Activated B cell treated with CpG ODN at 0.5 μM for 24 hours (primary cell): ENCODE measurements at regions of chr3 and their contacts with region 1.

Region 1: GRCh38 chr3:186783073-186783730 is at the start of gene EIF4A2:
- DNase-seq: peak; percentile 88
- ATAC-seq: peak; percentile 77
- H3K4me3 Mint-ChIP-seq: peak within 1 kb of the TSS; percentile 98
- H3K27ac Mint-ChIP-seq: peak within 1 kb of the TSS; percentile 99
- H3K4me1 Mint-ChIP-seq: peaks cover 48% of the 10 kb centered on the region
- H3K27me3 Mint-ChIP-seq: no peaks in the 10 kb centered on the region
- CTCF ChIP-seq: no peak
- total RNA-seq, gene EIF4A2: 533 and 574 TPM in 2 replicates

Region 2: DNA sequence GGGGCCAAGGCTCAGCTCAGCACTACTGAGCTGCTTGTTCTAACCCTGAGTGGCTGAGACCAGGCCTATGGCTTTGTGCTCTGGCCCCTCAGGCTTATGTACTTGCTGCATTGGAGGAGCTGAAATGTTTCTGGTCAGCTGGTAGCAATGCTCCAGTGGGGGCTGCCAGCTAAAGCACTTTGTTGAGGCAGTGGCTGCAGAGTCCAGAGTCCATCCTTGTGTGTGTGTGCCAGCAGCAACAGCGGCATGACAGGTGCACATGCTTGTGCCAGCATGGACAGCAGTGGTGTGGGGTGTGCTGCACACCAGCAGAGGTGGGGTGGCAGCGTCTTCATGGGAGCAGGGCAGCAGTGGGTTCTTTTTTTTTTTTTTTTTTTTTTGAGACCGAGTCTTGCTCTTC is 1802.1 kb before region 1 on chr3:
- CTCF ChIA-PET with region 1: no interaction called
- POLR2A ChIA-PET with region 1: no interaction called
- intact Hi-C with region 1: no loop called
- DNase-seq: no peak
- ATAC-seq: no peak
- H3K4me3 Mint-ChIP-seq: no peak overlapping the region
- H3K27ac Mint-ChIP-seq: no peak overlapping the region
- H3K4me1 Mint-ChIP-seq: peaks cover 4% of the 10 kb centered on the region
- H3K27me3 Mint-ChIP-seq: no peaks in the 10 kb centered on the region
- CTCF ChIP-seq: no peak

Region 3: DNA sequence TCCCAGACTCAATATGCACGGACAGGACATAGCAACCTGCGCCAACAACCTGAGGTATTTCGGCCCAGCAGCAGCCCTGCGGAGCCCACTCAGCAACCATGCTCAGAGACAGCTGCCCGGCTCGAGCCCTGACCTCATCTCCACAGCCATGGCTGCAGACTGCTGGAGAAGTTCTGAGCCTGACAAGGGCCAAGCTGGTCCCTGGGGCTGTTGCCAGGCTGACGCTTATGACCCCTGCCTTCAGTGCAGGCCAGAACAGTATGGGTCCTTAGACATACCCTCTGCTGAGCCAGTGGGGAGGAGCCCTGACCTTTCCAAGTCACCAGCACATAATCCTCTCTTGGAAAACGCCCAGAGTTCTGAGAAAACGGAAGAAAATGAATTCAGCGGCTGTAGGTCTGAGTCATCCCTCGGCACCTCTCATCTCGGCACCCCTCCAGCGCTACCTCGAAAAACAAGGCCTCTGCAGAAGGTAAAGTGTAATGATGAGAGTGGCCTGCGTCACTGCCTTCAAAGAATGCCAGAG is 1309.8 kb before region 1 on chr3:
- CTCF ChIA-PET with region 1: no interaction called
- POLR2A ChIA-PET with region 1: no interaction called
- intact Hi-C with region 1: no loop called
- DNase-seq: no peak
- ATAC-seq: no peak
- H3K4me3 Mint-ChIP-seq: no peak overlapping the region
- H3K27ac Mint-ChIP-seq: no peak overlapping the region
- H3K4me1 Mint-ChIP-seq: no peaks in the 10 kb centered on the region
- H3K27me3 Mint-ChIP-seq: no peaks in the 10 kb centered on the region
- CTCF ChIP-seq: no peak

Region 4: DNA sequence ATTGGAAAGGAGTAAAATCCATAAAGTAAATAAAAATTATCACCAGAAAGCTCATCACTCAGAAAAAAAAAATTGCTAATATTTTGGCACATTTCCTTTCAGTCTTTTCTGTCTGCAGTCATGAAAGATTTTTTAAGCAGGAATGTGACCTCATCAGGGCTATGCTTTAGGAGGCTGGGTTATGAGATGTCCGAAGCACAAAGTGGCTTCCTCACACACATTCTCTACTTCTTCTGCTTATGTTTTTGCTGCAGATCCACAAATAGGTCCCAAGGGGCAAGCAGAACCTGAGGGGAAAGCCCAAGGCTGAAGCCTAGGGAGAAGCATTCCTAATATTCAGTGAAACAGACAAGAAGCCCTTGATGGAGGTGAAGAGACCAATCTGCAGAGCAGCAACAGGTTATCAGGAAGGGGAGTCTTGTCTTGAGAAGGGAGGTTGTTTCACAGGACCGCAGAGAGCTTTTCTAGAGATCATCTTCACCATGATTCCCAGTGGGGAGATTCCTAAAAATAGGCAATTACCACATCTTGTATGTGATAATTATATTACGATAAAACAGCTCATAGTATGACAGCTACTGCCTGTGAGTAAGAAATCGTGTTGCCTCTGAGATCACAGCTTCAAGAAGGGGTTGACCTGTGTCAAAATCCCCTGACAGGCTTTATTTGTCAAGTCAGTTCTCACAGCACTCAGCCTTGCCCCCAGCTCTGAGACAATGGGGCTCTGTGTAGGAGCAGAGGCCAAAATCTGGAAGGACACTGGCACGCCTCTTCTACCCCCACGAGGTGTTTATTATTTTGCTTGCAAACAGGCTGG is 1018.8 kb before region 1 on chr3:
- CTCF ChIA-PET with region 1: no interaction called
- POLR2A ChIA-PET with region 1: no interaction called
- intact Hi-C with region 1: no loop called
- DNase-seq: no peak
- ATAC-seq: no peak
- H3K4me3 Mint-ChIP-seq: no peak overlapping the region
- H3K27ac Mint-ChIP-seq: no peak overlapping the region
- H3K4me1 Mint-ChIP-seq: no peaks in the 10 kb centered on the region
- H3K27me3 Mint-ChIP-seq: peaks cover 26% of the 10 kb centered on the region
- CTCF ChIP-seq: no peak

Region 5: GRCh38 chr3:185942907-185943759 is 840.1 kb before region 1 on chr3:
- CTCF ChIA-PET with region 1: no interaction called
- POLR2A ChIA-PET with region 1: interaction called, 58 read pairs
- intact Hi-C with region 1: loop called (anchors 1 kb)
- DNase-seq: peak; percentile 78
- ATAC-seq: peak; percentile 99
- H3K4me3 Mint-ChIP-seq: peak overlapping the region; percentile 58
- H3K27ac Mint-ChIP-seq: peak overlapping the region; percentile 61
- H3K4me1 Mint-ChIP-seq: peaks cover 16% of the 10 kb centered on the region
- H3K27me3 Mint-ChIP-seq: peaks cover 7% of the 10 kb centered on the region
- CTCF ChIP-seq: peak; percentile 99

Region 6: DNA sequence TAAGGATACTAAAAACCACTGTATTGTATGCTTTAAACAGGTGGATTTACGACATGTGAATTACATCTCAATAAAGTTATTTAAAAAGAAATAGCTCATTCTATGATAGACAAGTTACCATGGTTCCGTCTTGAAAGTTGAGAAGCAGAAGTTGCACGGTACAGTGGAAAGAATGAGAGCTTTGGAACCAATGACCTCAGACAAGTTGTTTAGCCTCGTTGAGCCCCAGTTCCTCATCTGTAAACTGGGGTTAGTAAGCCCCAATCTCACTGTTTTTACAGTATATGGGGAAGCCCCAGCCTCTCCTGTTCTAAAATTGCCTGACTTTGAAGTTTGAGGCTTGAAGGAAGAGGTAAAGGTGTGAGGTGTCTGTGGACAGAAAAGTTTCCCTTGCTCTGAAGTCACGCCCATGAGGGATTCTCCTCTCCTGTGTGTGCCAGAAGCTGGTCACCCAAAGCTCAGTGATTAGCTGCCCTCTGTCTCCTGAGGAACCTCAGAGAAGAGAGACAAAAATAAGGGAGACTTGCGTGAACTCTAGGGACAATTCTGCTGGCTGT is 249.0 kb before region 1 on chr3:
- CTCF ChIA-PET with region 1: no interaction called
- POLR2A ChIA-PET with region 1: interaction called, 13 read pairs
- intact Hi-C with region 1: no loop called
- DNase-seq: no peak
- ATAC-seq: peak; percentile 82
- H3K4me3 Mint-ChIP-seq: peak overlapping the region; percentile 77
- H3K27ac Mint-ChIP-seq: peak overlapping the region; percentile 97
- H3K4me1 Mint-ChIP-seq: peaks cover 83% of the 10 kb centered on the region
- H3K27me3 Mint-ChIP-seq: no peaks in the 10 kb centered on the region
- CTCF ChIP-seq: no peak

Region 7: DNA sequence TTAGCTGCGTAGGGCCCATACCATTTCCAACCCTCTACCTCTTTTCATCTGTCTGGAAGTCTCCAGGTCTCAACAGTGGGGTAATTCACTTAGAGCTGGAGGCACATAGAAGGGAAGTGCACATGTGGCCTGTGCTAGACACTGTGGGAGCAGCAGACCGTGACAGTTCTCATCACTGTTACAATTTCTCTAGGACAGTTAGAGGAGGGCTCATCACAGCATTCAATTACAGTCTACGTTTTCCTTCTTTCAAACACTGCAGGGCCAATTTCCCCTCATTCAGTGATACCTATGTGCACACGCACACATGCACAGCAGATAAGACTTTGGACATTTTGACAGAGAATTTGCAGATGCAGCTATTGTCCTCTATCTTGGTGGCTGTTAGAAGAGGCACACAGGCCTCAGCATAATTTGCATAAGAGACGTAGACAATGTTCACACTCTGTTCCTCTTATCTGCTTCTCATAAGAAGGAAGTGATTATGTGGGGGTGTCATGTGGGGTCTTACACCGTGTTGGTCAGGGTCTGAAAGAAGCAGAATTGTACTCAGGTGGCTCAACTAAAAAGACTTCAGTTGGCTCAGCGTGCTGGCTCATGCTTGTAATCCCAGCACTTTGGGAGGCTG is 130.0 kb before region 1 on chr3:
- CTCF ChIA-PET with region 1: no interaction called
- POLR2A ChIA-PET with region 1: interaction called, 10 read pairs
- intact Hi-C with region 1: loop called (anchors 1 kb)
- DNase-seq: no peak
- ATAC-seq: peak; percentile 92
- H3K4me3 Mint-ChIP-seq: peak overlapping the region; percentile 8
- H3K27ac Mint-ChIP-seq: peak overlapping the region; percentile 59
- H3K4me1 Mint-ChIP-seq: peaks cover 24% of the 10 kb centered on the region
- H3K27me3 Mint-ChIP-seq: peaks cover 4% of the 10 kb centered on the region
- CTCF ChIP-seq: no peak

Region 8: DNA sequence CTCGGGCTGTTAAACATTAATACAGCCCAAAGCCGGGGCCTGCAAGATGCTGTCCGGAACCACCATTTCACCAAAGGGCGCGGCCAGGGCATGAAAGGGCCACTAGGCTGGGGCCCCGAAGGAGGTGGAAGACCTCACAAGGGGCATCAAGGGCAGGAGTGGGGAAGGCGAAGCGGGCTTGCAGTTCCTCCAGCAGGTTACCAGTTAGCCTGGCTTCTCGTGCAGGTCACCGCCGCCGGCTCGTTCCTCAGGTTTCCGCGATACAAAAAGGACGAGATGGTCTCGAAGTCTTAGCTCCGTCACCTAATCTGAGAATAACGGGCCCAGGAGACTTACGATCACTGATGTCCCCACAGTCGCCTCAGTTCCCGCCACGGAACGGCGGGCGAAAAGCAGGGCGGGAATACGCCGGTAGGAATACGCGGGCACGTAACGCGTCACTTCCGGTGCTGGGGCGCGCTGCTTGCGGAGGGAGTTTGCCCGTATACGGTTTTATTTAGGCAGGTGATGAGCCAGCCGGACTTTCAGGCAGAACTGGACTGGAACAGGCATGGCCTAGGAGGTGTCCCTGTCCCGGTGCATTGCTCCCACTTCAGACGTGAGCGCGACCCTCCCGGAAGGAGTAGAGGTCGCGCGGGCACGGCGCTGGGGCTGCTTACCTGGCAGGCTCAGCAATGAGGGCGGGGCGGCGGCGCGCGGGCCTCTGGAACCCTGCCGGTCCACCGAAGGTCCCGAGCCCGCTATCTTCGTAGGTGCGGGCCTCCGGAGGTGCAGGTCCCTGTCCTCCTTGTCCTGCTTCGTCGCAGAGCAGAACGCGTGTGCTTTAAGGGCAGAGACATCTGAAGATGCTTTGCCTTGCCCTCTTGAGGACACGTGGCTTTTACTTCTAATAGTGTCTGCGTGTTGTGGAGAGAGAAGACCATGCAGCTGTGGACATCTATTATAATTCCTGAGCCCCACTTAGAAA is 23.2 kb after region 1 on chr3 and contains the start of gene RFC4:
- CTCF ChIA-PET with region 1: no interaction called
- POLR2A ChIA-PET with region 1: interaction called, 93 read pairs
- intact Hi-C with region 1: loop called (anchors 1 kb)
- DNase-seq: peak; percentile 78
- ATAC-seq: peak; percentile 86
- H3K4me3 Mint-ChIP-seq: peak within 1 kb of the TSS; percentile 96
- H3K27ac Mint-ChIP-seq: peak within 1 kb of the TSS; percentile 91
- H3K4me1 Mint-ChIP-seq: peaks cover 17% of the 10 kb centered on the region
- H3K27me3 Mint-ChIP-seq: no peaks in the 10 kb centered on the region
- CTCF ChIP-seq: no peak
- total RNA-seq, gene RFC4: 28.8 and 29.9 TPM in 2 replicates

Region 9: DNA sequence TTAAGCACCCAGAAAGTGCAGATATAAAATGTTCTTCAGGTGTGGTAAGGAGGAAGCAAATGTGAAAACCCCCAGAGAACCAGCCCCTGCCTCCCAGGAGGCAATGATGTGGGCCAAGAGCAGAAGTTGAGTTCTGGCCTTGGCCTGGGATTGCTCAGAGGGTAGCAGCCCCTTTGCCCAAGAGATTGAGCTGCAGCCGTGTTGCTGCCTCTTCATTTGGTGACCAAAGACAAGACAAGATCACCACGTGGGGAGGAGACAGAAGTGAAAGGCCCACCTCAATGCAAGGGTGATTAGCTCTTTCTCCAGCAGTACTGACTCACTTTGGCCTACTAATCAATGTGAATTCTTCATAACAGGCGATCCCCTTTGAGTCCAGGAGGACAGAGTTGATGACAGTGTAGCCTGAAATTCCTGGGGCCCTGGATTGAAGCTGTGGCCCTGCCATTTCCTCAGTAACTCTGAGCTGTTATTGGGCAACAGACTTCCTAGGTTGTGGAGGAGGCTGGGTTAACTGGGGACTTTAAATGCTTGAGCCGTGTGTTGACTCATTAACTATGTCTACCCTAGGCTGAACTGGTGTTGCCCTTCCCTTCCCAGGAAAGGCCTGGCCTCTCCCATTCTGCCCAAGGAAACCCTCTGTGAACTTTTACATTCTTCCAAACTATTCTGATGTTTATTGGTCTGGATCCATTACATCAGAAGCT is 233.6 kb after region 1 on chr3:
- CTCF ChIA-PET with region 1: no interaction called
- POLR2A ChIA-PET with region 1: interaction called, 11 read pairs
- intact Hi-C with region 1: loop called (anchors 5 kb)
- DNase-seq: peak; percentile 52
- ATAC-seq: peak; percentile 66
- H3K4me3 Mint-ChIP-seq: peak overlapping the region; percentile 73
- H3K27ac Mint-ChIP-seq: peak overlapping the region; percentile 87
- H3K4me1 Mint-ChIP-seq: peaks cover 100% of the 10 kb centered on the region
- H3K27me3 Mint-ChIP-seq: no peaks in the 10 kb centered on the region
- CTCF ChIP-seq: no peak

Region 10: DNA sequence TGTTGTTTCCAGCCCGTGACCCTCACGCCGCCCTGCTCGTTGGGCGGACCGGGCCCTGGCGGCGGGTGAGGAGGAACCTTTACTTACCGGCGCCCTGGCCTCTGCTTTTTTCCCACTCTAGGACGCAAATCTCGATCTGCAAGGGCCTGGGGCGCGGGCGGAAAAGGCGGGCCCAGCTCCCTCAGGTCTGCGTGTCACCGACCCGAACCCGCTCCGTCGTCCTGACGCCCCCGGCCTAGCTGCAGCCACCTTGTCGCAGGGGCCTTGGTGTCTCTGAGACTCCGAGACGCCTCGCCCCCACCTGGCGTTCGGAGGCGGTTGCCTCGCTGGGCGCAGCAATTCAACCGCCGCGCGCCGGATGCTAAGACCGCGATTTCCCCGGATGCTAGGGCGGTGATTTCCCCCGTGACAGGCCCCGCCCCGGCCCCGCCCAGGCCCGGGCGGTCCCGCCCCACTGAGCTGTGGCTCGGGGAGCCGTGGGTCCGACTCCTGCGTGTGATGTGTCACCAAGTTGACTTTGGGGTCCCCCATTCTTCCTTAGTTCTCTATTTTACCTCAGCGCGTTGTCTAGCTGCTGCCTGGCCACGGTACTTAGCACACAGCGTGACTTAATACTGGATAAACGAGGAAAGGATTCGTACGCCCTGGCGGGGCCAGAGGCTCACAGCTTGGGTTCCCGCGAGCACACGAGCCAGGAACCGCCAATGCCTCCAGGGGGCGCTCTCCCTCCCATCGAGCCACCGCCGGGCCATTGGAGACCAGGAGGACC is 356.1 kb after region 1 on chr3 and contains the start of gene RPL39L:
- CTCF ChIA-PET with region 1: interaction called, 5 read pairs
- POLR2A ChIA-PET with region 1: interaction called, 25 read pairs
- intact Hi-C with region 1: no loop called
- DNase-seq: peak; percentile 95
- ATAC-seq: peak; percentile 95
- H3K4me3 Mint-ChIP-seq: peak within 1 kb of the TSS; percentile 90
- H3K27ac Mint-ChIP-seq: peak within 1 kb of the TSS; percentile 95
- H3K4me1 Mint-ChIP-seq: peaks cover 19% of the 10 kb centered on the region
- H3K27me3 Mint-ChIP-seq: no peaks in the 10 kb centered on the region
- CTCF ChIP-seq: no peak
- total RNA-seq, gene RPL39L: 4.7 and 6.9 TPM in 2 replicates